Dorsolateral prefrontal cortex (tissue), 120 donors: ENCODE measurements at regions of chr14 and their contacts with region 1.

Region 1: DNA sequence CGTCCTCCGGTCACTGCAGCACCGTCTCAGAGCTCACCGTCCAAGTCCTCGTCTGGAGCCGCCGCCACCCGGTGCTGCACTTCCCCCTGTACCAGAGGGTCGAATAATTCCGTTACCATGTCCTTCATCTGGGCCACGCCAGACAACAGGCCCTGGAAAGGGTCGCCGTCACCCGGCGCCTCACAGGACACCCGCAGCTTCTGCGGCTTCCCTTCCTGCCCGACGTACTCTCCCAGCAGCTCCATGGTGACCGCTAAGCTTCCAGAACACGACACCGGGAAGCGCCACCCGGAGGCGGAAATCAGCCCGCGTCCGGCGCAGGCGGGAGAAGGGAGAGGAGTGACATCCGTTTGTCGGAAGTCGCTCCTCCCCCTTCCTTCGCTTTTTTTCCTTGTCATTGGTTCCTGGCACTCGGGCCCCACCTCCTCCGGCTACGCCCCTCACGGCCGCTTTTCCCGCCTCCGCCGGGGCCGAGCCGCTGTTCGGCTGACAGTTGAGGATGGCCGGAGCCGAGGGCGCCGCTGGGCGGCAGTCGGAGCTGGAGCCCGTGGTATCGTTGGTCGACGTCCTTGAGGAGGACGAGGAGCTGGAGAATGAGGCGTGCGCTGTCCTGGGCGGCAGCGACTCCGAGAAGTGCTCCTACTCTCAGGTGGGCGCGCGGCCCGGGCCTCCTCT is at the starts of genes GON7 and UBR7:
- DNase-seq: peak; percentile 84 to 97 (median 95)
- H3K4me3 ChIP-seq: peak within 1 kb of the TSS; percentile 63 to 99 (median 94)
- H3K27ac ChIP-seq: peak within 1 kb of the TSS; percentile 6 to 94 (median 84)
- H3K27me3 ChIP-seq: no peaks in the 10 kb centered on the region
- CTCF ChIP-seq: peak in 55 of 56 donors; percentile 27 to 90 (median 63)
- total RNA-seq, gene GON7: 3.6 to 13.0 (median 8.3) TPM
- total RNA-seq, gene UBR7: 21.7 to 43.1 (median 30.0) TPM

Region 2: DNA sequence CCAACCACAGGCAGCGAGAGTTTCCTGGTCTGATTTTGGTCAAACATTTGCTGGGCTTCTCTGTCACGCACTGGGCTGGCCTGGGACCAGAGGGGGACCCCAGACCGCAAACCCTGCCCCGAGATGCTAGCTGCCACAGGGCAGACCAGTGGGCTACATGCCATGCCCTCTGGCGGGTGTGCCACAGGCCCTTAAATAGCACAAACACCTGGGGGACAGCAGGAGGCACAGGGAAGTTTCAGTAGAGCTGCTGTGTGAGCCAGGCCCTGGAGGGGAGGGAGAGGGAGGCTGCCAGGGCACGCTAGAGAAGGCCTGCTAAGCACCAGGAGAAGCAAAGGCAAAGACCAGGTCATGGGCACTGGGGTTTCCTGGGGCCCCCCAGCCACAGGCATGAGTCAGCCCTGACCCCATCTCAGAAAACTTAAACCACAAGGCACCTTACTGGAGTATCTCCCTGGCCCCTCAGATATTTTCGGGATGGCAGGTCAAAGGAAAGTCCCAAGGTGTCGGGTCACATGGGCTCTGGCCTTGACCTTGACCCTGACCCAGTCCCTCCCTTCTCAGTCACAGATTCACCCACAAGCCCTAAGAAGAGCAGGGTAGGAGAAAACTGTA is 120.4 kb before region 1 on chr14:
- intact Hi-C with region 1: no loop called
- DNase-seq: no peak
- H3K4me3 ChIP-seq: no peak overlapping the region
- H3K27ac ChIP-seq: peak overlapping the region in 21 of 59 donors; percentile 1 to 64 (median 17)
- H3K27me3 ChIP-seq: no peaks in the 10 kb centered on the region
- CTCF ChIP-seq: no peak

Region 3: GRCh38 chr14:93150227-93151206 is 56.4 kb before region 1 on chr14:
- intact Hi-C with region 1: no loop called
- DNase-seq: no peak
- H3K4me3 ChIP-seq: no peak overlapping the region
- H3K27ac ChIP-seq: peak overlapping the region in 1 of 59 donors; percentile 25
- H3K27me3 ChIP-seq: no peaks in the 10 kb centered on the region
- CTCF ChIP-seq: no peak

Region 4: DNA sequence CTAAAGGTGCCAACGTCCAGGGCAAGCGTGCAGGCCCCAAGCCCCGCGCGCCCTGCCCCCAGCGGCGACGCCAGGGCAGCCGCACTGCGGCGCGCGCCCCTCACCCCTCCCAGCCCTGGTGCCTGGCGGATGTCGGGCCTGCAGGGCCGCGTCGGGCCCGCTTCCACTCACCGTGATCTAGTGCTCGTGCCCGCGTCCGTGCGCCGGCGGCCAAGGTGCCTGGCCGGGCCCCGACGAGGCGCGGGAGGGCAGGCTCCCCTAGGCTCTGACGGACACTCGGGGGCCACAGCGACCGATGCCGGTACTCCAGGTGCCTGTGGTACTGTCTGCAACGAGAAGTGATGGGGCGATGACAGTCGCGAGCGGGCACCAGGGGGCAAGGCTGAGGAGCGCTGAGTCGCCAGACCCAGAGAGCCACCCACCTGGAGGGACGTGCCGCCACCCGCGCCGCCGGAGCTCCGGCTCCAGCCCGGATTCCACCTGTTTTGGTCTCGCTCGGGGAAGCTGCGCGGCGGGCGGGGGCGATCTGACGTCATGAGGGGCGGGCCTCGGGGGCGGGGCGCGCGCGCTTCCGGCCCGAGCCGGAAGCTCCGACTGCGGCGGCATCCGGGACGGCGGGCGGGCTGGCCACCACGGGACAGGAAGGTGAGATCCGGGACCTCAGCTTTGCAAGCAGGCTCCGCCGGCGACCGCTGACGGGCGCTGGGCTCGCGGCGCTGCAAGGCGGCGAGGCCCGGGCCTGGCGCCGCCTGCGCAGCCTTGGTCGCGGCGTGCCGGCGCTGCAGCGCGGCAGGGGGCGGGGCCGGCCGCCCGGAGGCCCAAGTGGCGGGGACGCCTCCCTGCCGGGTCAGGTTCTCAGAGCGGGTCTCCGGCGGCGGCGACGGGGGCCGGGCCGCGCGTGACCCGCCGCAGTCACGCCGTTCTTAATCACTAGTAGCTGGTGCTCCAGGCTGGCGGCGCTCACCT is 22.3 kb before region 1 on chr14 and contains the starts of genes LYSET and MOAP1:
- intact Hi-C with region 1: loop called (anchors 1 kb)
- DNase-seq: peak; percentile 74 to 92 (median 86)
- H3K4me3 ChIP-seq: peak within 1 kb of the TSS; percentile 72 to 100 (median 96)
- H3K27ac ChIP-seq: peak within 1 kb of the TSS; percentile 64 to 99 (median 96)
- H3K27me3 ChIP-seq: no peaks in the 10 kb centered on the region
- CTCF ChIP-seq: peak in 28 of 56 donors; percentile 2 to 49 (median 26)
- total RNA-seq, gene LYSET: 7.5 to 23.0 (median 15.3) TPM
- total RNA-seq, gene MOAP1: 71.5 to 285 (median 191) TPM

Region 5: GRCh38 chr14:93381644-93382043 is 174.7 kb after region 1 on chr14:
- intact Hi-C with region 1: loop called in 1 of 2 experiments (anchors 5 kb)
- DNase-seq: no peak
- H3K4me3 ChIP-seq: no peak overlapping the region
- H3K27ac ChIP-seq: peak overlapping the region in 2 of 59 donors; percentile 16 to 17
- H3K27me3 ChIP-seq: no peaks in the 10 kb centered on the region
- CTCF ChIP-seq: no peak

Region 6: GRCh38 chr14:93543766-93544165 is 336.8 kb after region 1 on chr14:
- intact Hi-C with region 1: loop called (anchors 5 to 10 kb)
- DNase-seq: no peak
- H3K4me3 ChIP-seq: no peak overlapping the region
- H3K27ac ChIP-seq: no peak overlapping the region
- H3K27me3 ChIP-seq: no peaks in the 10 kb centered on the region
- CTCF ChIP-seq: peak; percentile 19 to 77 (median 56)